Left ventricle myocardium inferior (tissue), 1 donor: ENCODE measurements at regions of chr1 and their contacts with region 1.

Region 1: DNA sequence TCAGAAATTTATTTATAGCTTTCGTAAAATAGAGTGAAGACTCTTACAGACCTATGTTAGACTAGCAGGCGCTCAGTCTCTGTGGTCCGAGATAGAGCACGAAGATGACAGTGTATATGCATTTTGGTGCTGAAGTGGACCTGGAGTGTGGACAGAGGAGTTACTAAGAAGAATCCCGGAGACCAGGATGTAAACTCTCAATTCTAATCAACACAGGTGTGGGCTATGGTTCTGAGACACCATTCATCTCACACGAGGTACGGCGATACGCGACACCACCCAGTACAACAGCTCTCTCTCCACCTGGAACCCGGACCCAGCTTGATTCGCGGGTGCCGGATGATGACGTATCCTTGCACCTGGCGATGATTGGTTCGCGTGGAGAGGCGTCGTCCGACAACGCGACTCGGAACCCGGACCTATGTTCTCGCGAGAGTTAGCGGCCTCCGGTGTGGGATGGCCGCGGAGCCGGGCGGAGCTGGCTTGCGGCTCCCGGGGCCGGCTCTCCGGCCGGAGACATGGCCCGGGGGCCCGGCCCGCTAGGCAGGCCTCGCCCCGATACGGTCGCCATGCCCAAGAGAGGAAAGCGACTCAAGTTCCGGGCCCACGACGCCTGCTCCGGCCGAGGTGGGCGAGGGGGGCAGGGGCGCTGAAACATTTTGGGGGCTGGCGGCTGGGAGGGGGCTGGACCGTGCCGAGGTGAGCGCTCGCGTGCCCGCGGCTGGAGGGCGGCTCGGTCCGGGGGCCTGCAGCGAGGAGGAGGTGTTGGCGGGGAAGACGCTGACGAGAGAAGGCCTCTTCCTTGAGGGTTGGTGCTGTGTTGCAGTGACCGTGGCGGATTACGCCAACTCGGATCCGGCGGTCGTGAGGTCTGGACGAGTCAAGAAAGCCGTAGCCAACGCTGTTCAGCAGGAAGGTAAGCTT is at the start of gene TMEM183A:
- DNase-seq: peak; percentile 95
- H3K4me3 ChIP-seq: peak within 1 kb of the TSS; percentile 95
- H3K27ac ChIP-seq: peak within 1 kb of the TSS; percentile 92
- H3K4me1 ChIP-seq: peaks cover 48% of the 10 kb centered on the region
- H3K27me3 ChIP-seq: no peaks in the 10 kb centered on the region
- CTCF ChIP-seq: no peak
- total RNA-seq, gene TMEM183A: 21.8 TPM

Region 2: DNA sequence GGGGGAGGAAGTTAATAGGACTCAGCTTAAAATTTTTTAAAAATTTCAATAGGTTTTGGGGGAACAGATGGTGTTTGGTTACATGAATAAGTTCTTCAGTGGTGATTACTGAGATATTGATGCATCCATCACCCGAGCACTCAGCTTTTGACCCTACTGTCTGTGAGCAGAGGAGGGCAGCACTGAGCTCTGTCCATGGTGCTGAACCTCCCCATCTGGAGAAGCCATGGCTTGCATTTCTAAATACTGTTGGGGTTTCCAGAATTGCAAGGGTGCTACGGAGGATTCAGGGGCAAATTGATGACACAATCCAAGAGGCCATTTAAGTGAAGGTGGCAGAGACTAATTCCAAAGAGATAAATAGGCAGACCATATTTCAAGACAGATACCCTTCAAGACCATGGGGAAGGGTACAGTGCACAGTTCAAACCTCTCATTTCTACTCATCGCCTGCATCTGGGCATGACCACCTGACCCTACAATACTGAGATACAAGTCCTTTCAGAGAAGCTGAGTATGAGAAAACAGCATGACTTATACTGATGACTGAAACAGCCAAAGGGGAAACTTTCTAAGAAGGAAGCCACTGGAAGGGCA is 314.2 kb before region 1 on chr1:
- intact Hi-C with region 1: no loop called
- DNase-seq: peak; percentile 50
- H3K4me3 ChIP-seq: no peak overlapping the region
- H3K27ac ChIP-seq: no peak overlapping the region
- H3K4me1 ChIP-seq: no peaks in the 10 kb centered on the region
- H3K27me3 ChIP-seq: peaks cover 92% of the 10 kb centered on the region
- CTCF ChIP-seq: peak; percentile 58

Region 3: DNA sequence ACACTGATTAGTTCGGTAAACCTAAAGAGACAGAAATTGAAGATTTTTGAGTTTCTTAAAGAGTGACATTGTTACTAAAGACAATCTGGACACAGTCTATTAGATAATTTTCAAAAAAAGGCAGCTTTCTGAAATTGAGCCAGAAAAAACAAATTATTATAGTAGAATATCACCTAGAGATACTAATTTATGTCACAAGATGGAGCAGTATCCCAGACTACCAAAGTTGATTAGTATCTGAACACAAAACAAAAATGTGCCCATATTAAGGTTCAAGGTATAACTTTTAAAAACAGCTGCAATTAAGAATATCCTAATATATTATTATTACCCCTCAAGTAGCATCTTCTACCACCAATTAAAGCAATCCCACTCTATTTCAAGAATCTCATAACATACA is 256.5 kb before region 1 on chr1:
- intact Hi-C with region 1: loop called (anchors 10 kb)
- DNase-seq: no peak
- H3K4me3 ChIP-seq: no peak overlapping the region
- H3K27ac ChIP-seq: no peak overlapping the region
- H3K4me1 ChIP-seq: peaks cover 5% of the 10 kb centered on the region
- H3K27me3 ChIP-seq: no peaks in the 10 kb centered on the region
- CTCF ChIP-seq: no peak